ENCODE measurements at regions of chr1 and their contacts with region 1.

Region 1: DNA sequence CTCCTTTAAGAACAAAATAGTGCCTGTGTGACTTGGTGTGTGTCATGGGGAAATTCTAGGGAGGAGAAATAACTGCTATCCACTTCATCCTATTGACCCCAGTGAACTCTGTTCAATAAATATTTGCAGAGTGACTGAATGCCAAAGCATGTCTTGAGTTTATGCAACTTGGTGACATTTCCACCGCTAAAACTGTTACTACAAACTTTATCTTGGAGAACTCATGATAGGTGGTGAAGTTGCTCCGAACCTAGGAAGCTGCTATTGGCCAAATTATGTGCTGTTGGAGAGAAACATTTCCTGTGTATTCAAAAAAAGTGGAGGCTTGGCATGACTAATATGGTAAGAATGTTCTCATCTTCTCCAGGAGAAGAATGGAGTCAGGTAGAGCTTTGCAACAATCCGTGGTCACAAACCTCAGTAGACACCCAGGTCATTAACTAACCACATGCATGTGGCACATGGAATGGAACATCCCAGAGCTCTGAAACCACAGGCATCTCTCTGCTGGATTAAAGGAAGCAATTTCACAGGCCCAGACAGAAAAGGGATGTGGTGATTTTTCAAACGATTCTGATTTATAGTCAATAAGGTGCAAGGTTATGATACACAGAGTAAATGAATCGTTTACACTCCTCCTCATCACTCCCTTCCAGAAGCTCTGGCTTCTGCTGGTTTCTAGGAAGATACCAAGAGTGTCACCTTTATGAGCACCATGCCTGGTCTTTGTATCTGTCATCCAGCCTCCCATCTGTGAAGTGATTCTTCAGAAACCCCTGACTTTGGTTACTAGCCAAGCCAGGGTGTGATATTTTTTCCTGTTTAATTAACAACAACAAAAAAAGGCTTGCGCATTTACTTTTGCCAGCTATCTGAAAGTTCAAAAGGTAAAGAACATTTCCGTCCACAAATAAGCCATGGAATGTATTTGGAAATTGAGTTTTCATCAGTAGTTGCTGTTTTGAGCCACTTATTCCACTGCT is 361.1 kb downstream of the TGFB2 start:
- DNase-seq: peak; percentile 82
- H3K4me3 Mint-ChIP-seq: peak overlapping the region; percentile 17
- H3K27ac Mint-ChIP-seq: peak overlapping the region; percentile 96
- H3K4me1 Mint-ChIP-seq: peaks cover 62% of the 10 kb centered on the region
- H3K27me3 Mint-ChIP-seq: no peaks in the 10 kb centered on the region
- CTCF ChIP-seq: no peak

Region 2: DNA sequence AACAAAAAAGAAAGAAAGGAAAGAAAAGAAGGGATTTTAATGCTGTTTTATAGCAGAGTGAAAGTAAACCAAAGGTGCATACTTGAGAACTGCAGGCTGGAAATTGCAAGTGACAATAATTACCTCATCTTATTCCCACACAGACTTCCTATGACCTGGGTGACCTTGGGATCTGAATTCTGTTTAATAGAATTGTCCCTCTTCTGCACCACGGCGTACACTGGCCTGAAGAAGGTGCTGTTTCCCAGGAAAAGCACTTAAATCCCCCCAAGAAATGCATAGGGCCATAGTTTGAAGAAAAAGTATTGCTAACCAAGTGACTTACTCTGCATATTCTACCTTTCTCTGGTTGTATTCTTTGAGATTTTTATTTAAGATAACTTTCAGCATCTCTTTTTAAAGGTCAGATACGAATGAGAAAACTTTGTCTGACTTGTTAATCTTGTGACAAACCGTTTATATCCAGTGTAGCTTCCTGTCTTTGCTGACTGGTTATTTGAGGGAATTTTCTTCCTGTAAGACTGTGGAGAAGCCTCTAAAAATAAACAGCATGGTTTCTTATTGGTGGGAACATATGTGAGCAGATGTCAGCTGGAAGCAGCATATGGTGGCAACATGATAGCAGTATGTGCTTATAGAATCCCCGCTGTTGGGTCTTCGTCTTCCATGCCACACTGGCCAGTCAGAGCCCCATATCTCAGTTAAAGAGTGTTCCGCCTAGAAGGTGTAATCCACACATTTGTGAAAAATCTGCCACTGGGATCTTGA is 344.7 kb before region 1 on chr1:
- CTCF ChIA-PET with region 1: no interaction called
- intact Hi-C with region 1: loop called (anchors 5 kb)
- DNase-seq: no peak
- H3K4me3 Mint-ChIP-seq: no peak overlapping the region
- H3K27ac Mint-ChIP-seq: no peak overlapping the region
- H3K4me1 Mint-ChIP-seq: peaks cover 52% of the 10 kb centered on the region
- H3K27me3 Mint-ChIP-seq: no peaks in the 10 kb centered on the region
- CTCF ChIP-seq: peak; percentile 38

Region 3: DNA sequence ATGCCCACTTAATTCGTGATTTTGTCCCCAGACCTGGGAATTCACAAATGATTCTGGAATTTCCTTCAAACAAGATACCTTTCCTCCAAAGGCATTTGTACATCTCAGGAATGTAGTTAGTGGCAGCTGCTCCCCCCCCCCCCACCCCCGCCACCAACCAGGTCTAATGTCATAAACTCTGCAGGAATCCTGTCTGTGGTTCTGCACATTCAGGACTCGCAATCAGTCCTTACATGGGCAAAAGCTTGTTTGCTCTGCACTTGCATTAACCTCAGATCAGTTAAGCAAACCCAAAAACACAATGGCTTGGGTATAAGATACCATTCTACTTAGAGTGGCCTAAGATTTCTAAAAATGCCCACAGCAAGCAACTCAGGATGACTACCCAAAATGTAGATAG is 217.2 kb before region 1 on chr1:
- CTCF ChIA-PET with region 1: no interaction called
- intact Hi-C with region 1: loop called (anchors 5 kb)
- DNase-seq: peak; percentile 31
- H3K4me3 Mint-ChIP-seq: no peak overlapping the region
- H3K27ac Mint-ChIP-seq: no peak overlapping the region
- H3K4me1 Mint-ChIP-seq: peaks cover 59% of the 10 kb centered on the region
- H3K27me3 Mint-ChIP-seq: no peaks in the 10 kb centered on the region
- CTCF ChIP-seq: no peak

Region 4: GRCh38 chr1:218633238-218633988 is 72.8 kb before region 1 on chr1:
- CTCF ChIA-PET with region 1: no interaction called
- intact Hi-C with region 1: no loop called
- DNase-seq: no peak
- H3K4me3 Mint-ChIP-seq: no peak overlapping the region
- H3K27ac Mint-ChIP-seq: no peak overlapping the region
- H3K4me1 Mint-ChIP-seq: peaks cover 8% of the 10 kb centered on the region
- H3K27me3 Mint-ChIP-seq: no peaks in the 10 kb centered on the region
- CTCF ChIP-seq: no peak

Region 5: DNA sequence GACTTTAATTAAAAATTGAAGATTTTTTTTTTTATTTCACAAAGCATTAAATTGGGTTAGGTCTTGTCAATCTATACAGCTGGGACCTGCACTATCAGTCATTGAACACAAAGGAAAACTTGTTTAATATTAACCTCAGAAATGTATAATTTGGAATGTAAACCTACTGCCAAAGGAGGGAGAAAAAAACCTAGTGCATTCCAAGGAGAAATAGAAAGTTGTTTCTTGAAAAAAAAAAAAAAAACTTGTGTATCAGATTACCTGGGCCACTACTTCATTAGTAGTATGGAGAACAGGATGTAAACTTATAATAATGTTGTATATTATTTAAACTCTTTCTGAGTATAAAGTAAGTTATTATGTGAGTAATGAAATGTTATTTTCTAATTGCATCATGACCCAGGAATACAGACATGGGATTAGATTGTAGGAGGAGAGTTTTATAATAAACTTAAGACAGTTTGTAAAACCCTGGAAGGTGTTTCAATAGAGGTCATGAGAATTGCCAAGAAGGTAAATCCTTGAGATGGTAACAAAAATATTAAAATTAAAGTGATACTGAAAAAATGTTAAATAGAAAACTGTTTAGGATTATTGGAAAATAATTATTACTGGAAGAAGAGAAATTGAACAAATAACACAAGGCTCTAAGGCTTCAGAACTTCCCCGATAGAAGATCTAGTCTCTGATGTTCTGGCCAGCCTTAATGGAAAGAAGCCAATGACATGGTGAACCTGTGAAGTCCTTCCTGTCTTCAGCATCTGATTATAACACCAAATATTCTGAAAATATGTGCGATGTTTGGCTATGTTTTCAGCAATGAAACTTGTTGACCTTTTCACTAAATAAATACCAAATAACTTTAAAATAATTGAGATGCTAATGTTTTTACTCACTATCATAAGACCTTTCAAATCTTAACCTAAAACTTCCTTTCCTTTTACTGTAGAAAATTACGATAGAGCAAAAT is 54.7 kb after region 1 on chr1:
- CTCF ChIA-PET with region 1: no interaction called
- intact Hi-C with region 1: loop called (anchors 5 kb)
- DNase-seq: no peak
- H3K4me3 Mint-ChIP-seq: no peak overlapping the region
- H3K27ac Mint-ChIP-seq: peak overlapping the region; percentile 83
- H3K4me1 Mint-ChIP-seq: peaks cover 67% of the 10 kb centered on the region
- H3K27me3 Mint-ChIP-seq: no peaks in the 10 kb centered on the region
- CTCF ChIP-seq: no peak

Region 6: GRCh38 chr1:218823291-218823900 is 117.2 kb after region 1 on chr1:
- CTCF ChIA-PET with region 1: interaction called, 5 read pairs
- intact Hi-C with region 1: loop called (anchors 1 kb)
- DNase-seq: peak; percentile 19
- H3K4me3 Mint-ChIP-seq: no peak overlapping the region
- H3K27ac Mint-ChIP-seq: peak overlapping the region; percentile 77
- H3K4me1 Mint-ChIP-seq: peaks cover 57% of the 10 kb centered on the region
- H3K27me3 Mint-ChIP-seq: no peaks in the 10 kb centered on the region
- CTCF ChIP-seq: no peak

Region 7: DNA sequence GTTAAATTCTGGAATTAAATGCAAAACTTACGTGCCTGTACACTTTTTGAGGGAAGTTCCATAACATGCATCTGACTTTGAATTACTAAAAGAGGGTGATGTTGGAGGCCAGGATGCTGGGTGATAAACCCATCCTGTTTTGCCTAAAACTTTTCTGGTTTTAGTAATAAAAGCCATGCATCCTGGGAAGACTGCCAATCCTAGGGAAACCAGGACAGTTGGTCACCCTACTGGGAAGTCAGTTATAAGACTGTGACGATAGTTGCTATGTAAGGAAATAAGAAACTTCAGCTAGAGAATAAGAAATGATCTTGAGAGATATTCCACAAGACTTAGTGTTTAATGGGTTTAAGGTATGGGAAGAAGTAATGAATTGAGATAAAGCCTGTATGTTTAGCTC is 130.8 kb after region 1 on chr1:
- CTCF ChIA-PET with region 1: no interaction called
- intact Hi-C with region 1: no loop called
- DNase-seq: no peak
- H3K4me3 Mint-ChIP-seq: no peak overlapping the region
- H3K27ac Mint-ChIP-seq: no peak overlapping the region
- H3K4me1 Mint-ChIP-seq: peaks cover 9% of the 10 kb centered on the region
- H3K27me3 Mint-ChIP-seq: no peaks in the 10 kb centered on the region
- CTCF ChIP-seq: no peak

Region 8: DNA sequence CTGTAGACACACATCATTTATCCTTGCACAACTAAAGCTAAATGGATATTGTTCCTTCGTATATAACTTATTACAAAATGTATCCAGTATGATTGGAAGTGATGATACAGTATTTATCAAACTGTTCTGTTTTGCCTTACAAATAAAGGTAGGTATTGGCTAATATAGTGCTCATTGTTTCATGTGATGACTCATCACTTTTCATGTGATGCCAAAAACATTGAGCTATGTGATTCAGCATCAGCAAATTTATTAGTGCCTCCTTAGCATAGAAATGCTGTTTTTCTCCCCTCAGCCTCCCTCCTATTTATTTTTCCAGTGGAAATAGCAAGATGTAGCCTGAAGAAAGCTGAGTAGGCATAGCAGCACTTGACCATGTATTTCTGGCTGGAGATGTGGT is 238.8 kb after region 1 on chr1:
- CTCF ChIA-PET with region 1: no interaction called
- intact Hi-C with region 1: loop called (anchors 1 kb)
- DNase-seq: no peak
- H3K4me3 Mint-ChIP-seq: no peak overlapping the region
- H3K27ac Mint-ChIP-seq: peak overlapping the region; percentile 66
- H3K4me1 Mint-ChIP-seq: peaks cover 51% of the 10 kb centered on the region
- H3K27me3 Mint-ChIP-seq: no peaks in the 10 kb centered on the region
- CTCF ChIP-seq: no peak

Measured in Calu3 (cell line).